Sciatic nerve (tissue), 2 donors: ENCODE measurements at regions of chr12 and their contacts with region 1.

Region 1: GRCh38 chr12:109880016-109880931 is at the start of gene GLTP:
- DNase-seq: peak; percentile 89
- ATAC-seq: peak; percentile 93
- total RNA-seq, gene GLTP: 51.0 TPM

Region 2: DNA sequence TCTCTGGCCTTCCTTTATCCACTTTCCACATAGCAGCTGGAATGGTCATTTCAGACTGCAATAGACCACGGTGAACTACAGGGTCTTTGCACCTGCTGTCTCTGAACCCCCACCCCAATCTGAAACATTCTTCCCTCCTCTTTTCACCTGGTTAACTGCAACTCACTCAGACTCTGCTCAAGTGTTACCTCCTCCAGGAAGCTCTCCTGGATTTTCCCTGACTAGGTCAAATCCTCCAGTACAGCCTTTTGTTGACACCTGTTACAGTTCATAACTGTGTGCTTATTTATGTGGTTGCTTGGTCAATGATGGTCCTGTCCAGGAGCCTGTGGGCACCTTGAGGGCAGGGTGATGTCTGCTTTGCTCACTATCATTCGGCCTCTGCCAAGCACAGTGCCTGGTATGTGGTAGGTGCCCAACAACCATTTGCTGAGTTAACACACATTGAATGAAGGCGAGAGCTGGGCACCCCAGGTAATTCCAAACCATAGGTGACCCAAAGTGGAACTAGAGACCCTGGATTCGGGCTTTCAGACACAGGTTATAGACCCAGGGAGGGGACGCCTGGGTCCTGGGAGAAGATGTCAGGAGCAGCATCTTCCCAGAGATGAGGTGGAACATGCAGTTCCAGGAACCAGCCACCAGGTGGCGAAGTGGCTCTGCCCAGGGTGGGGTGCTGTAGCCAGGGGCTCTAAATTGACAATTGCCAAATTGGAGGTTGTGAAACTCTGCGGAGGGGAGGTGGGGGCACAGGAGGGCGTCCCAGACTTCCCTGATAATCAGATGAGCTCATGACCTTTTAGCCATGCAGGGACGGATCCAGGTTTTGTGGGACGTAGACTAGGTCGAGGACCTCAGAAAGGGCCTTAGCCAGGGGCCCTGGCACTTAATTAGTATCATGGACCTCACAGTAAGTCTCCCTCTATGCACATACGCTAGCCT is 75.2 kb before region 1 on chr12:
- intact Hi-C with region 1: loop called (anchors 5 kb)
- DNase-seq: peak; percentile 83
- ATAC-seq: peak; percentile 93